Naive thymus-derived CD4-positive, alpha-beta T cell (primary cell): ENCODE measurements at regions of chr11 and their contacts with region 1.

Region 1: GRCh38 chr11:86919557-86920210 is 35.5 kb downstream of the FZD4 start:
- DNase-seq: peak in 5 of 9 donors; percentile 2 to 23 (median 13)
- ATAC-seq: peak; percentile 31
- H3K4me3 ChIP-seq: no peak overlapping the region
- H3K4me3 Mint-ChIP-seq: no peak overlapping the region
- H3K27ac ChIP-seq: no peak overlapping the region
- H3K27ac Mint-ChIP-seq: no peak overlapping the region
- H3K4me1 ChIP-seq: peaks cover 0 to 4% of the 10 kb centered on the region in 2 donors
- H3K4me1 Mint-ChIP-seq: peaks cover 0 to 7% (median 4%) of the 10 kb centered on the region in 7 donors
- H3K27me3 ChIP-seq: no peaks in the 10 kb centered on the region
- H3K27me3 Mint-ChIP-seq: peaks cover 0 to 12% (median 0%) of the 10 kb centered on the region in 5 donors

Region 2: DNA sequence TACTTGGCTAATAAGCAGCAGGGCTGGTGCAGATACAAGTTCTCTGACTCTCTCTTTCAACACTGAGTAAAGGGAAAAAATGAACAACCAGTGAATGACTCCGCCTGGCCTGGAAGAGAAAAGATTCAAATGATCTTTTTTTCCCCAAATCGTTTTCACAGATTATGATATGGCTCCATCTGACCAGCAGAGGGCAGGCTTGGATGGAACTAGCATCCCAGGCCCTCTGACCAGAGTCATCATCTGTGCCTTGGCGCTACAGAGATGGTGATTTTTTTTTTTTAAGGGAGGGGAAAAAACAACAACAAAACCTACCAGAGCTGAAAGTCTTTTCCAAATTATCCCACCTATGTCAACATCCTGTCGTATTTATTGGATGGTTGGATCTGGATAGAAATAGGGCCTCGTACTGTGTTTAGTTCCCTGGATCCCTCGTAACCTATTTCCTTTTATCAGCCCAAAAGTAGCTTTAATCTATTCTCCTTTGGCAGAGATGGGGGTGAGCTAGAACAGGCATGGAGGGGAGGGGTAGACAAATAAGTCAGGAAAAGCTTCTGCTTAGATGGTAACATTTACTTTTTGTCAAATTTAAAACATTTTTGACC is 49.6 kb before region 1 on chr11:
- CTCF ChIA-PET with region 1: interaction called, 5 read pairs
- POLR2A ChIA-PET with region 1: no interaction called
- intact Hi-C with region 1: loop called (anchors 1 kb)
- DNase-seq: peak in 6 of 9 donors; percentile 3 to 44 (median 13)
- ATAC-seq: peak; percentile 76
- H3K4me3 ChIP-seq: no peak overlapping the region
- H3K4me3 Mint-ChIP-seq: no peak overlapping the region
- H3K27ac ChIP-seq: no peak overlapping the region
- H3K27ac Mint-ChIP-seq: no peak overlapping the region
- H3K4me1 ChIP-seq: no peaks in the 10 kb centered on the region
- H3K4me1 Mint-ChIP-seq: peaks cover 0 to 2% (median 0%) of the 10 kb centered on the region in 7 donors
- H3K27me3 ChIP-seq: no peaks in the 10 kb centered on the region
- H3K27me3 Mint-ChIP-seq: peaks cover 0 to 9% (median 0%) of the 10 kb centered on the region in 5 donors

Region 3: GRCh38 chr11:86969258-86969657 is 49.6 kb after region 1 on chr11:
- CTCF ChIA-PET with region 1: no interaction called
- POLR2A ChIA-PET with region 1: no interaction called
- intact Hi-C with region 1: no loop called
- DNase-seq: no peak
- ATAC-seq: no peak
- H3K4me3 ChIP-seq: no peak overlapping the region
- H3K4me3 Mint-ChIP-seq: no peak overlapping the region
- H3K27ac ChIP-seq: no peak overlapping the region
- H3K27ac Mint-ChIP-seq: no peak overlapping the region
- H3K4me1 ChIP-seq: no peaks in the 10 kb centered on the region
- H3K4me1 Mint-ChIP-seq: no peaks in the 10 kb centered on the region
- H3K27me3 ChIP-seq: no peaks in the 10 kb centered on the region
- H3K27me3 Mint-ChIP-seq: peaks cover 12 to 47% (median 23%) of the 10 kb centered on the region in 5 donors